Activated T-helper 1 cell treated with anti-CD3 and anti-CD28 coated beads, Interleukin-12 subunit alpha, Interleukin-12 subunit beta, Interleukin-2, Interleukin-4 antibody, amounts not matched to agents 30 ng/mL and 10 ng/mL and 1 ng/mL, durations not matched to agents 14 hours and 24 hours and 36 hours (primary cell): ENCODE measurements at regions of chr20 and their contacts with region 1.

Region 1: GRCh38 chr20:62302341-62303058 is at the start of gene ADRM1:
- DNase-seq: peak; percentile 97
- H3K4me3 Mint-ChIP-seq: peak within 1 kb of the TSS; percentile 98
- H3K27ac Mint-ChIP-seq: peak within 1 kb of the TSS; percentile 100
- H3K4me1 Mint-ChIP-seq: peaks cover 28% of the 10 kb centered on the region
- H3K27me3 Mint-ChIP-seq: no peaks in the 10 kb centered on the region
- total RNA-seq, gene ADRM1: 181 and 188 TPM in 2 replicates

Region 2: DNA sequence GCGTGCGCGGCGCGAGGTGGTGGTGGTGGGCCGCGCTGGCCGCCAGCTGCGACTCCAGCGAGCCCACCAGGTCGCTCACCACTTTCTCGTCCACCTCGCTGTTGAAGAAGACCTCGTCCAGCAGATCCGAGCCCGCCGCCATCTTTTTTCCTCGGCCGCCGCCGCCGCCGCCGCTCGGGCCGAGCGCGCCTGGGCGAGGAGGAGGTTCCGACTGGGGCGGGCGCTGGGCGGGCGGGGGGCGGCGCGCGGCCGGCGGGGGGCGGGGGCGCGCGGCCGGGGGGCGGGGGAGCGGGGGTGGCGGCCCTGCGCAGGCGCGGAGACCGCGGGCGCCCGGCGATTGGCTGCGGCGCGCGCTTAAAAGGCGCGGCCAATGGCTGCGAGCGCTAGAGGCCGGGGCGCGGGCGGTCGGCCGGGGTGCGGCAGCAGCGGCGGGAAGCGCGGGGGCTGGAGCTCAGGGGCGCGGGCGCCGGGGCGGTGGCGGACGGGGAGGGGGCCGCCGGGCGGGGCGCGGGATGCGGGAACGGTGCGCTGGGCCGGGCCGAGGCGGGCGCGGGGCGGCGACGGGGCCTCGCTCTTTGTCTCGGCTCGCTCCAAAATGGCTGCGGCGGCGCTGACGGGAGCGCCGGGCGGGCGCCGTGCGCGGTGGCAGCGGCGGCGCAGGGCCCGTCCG is 236.7 kb before region 1 on chr20 and contains the start of gene TAF4:
- intact Hi-C with region 1: loop called (anchors 5 kb)
- DNase-seq: peak; percentile 80
- H3K4me3 Mint-ChIP-seq: peak within 1 kb of the TSS; percentile 84
- H3K27ac Mint-ChIP-seq: peak within 1 kb of the TSS; percentile 84
- H3K4me1 Mint-ChIP-seq: peaks cover 42% of the 10 kb centered on the region
- H3K27me3 Mint-ChIP-seq: peaks cover 6% of the 10 kb centered on the region
- total RNA-seq, gene TAF4: 26.3 and 28.3 TPM in 2 replicates

Region 3: DNA sequence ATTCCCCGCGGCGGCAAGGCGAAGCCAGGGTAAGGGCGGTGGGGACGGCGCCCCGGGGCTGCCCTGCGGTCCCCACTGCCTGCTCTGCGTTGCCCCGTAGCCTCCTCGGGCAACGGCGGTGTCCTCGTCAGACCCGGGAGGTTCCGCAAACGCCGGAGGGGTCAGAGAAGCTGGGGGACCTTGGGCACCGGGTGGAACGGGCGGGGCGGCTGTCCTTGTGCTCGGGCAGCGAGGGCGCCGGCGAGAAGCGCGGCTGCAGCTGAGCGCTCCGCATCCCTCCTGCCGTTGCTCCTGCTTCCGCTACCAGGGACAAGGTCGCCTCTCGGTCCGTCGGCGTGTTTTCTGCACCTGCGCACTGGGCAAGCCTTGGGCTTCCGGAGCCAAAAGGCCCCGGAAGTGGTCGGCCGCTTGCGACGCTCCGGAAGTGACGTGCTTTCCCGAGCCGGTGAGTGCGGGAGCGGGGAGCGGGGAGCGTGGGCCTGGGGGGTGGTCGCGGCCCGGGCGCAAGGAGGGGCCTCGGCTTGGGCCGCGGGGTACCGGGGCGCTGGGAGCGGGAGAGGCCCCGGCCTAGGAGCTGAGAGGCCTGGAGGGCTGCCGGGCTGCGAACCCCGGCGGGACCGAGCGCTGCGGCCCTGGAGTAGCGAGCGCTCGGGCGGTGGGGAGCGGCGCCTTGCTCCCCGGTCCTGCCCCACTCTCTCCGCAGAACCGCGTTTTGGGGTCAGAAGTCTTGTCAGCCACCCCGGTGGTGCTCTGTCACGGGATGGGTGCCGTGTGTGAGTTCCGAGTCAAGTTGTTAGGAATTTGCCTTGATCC is 119.7 kb before region 1 on chr20 and contains the start of gene MTG2:
- intact Hi-C with region 1: loop called (anchors 1 kb)
- DNase-seq: peak; percentile 95
- H3K4me3 Mint-ChIP-seq: peak within 1 kb of the TSS; percentile 92
- H3K27ac Mint-ChIP-seq: peak within 1 kb of the TSS; percentile 93
- H3K4me1 Mint-ChIP-seq: peaks cover 39% of the 10 kb centered on the region
- H3K27me3 Mint-ChIP-seq: no peaks in the 10 kb centered on the region
- total RNA-seq, gene MTG2: 45.4 and 46.3 TPM in 2 replicates

Region 4: DNA sequence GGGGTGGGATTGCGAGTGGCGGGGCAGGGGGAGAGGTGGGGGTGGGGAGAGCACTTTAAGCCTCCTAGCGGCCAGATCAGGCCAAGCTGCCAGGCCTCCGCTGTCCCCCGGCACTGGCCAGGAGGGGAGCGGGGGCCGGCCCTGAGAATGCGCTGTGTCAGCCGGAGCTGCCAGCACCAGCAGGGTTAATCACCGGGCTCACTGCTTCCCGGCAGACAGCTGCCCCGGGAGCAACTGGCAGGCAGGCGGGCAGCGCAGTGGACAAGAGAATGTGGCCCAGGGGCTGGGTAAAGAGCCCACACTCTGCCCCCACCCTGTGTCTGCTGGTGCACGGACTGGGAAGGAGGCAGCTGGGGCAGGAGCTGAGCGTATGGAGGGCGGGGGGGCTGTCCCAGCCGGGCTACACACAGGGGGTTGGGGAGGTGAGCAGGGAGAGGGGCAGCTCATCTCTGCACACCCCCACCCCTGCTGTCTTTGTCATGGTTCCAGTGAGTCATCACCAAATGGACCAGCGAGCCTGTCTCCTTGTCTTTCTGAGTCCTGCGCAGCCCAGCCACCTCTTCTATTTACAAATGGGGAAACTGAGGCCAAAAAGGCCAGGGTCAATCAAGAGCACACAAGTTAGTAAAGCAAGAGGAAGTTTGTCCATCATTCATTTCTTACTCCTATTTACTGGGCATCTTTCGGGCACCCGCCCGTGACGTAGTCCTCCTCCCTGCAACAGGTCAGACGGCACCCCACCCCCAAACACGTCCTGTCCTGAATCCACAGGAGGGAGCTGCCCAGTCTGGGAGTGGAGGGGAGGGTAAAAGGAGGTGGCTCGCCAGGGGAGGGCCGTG is 66.7 kb after region 1 on chr20:
- intact Hi-C with region 1: loop called (anchors 5 kb)
- DNase-seq: no peak
- H3K4me3 Mint-ChIP-seq: no peak overlapping the region
- H3K27ac Mint-ChIP-seq: no peak overlapping the region
- H3K4me1 Mint-ChIP-seq: no peaks in the 10 kb centered on the region
- H3K27me3 Mint-ChIP-seq: peaks cover 27% of the 10 kb centered on the region

Region 5: GRCh38 chr20:62500237-62500864 is 197.9 kb after region 1 on chr20:
- intact Hi-C with region 1: loop called (anchors 1 kb)
- DNase-seq: peak; percentile 70
- H3K4me3 Mint-ChIP-seq: no peak overlapping the region
- H3K27ac Mint-ChIP-seq: peak overlapping the region; percentile 89
- H3K4me1 Mint-ChIP-seq: peaks cover 26% of the 10 kb centered on the region
- H3K27me3 Mint-ChIP-seq: no peaks in the 10 kb centered on the region

Region 6: DNA sequence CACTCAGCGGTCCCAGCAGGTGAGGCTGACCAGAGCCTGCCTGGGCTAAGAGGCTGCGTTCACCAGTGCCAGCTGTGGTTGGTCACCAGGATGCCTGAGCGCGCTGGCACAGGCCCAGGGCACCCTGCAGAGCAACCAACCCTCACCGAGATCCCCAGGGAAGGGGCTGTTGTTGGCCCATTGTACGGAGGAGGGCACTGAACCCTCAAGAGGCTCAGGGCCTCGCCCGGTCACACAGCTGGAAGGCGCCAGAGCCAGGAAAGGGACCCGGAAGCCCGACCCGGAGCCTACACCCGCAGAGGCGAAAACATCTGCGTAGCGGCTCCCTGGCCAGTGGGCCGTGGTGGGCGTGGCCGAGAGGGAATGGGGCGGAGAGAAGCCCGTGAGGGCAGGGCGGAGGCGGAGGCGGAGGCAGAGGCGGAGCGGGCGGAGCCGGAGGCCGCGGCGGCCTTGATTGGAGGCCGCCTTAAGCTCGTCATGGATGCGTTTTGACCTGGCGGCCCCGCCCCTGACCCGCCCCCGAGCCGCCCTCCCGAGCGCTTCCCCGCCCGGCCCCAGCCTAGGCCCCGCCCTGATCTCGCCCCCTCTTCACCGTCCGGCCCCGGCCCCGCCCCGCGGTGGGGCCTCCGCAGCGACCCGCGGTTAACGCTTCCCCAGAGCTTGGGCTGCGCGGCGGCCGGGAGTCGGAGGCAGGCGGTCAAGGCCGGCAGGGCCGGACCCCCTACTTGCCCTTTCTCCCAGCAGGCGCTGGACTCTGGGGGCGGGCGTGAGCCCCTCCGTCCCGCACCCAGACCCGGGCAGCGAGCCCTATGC is 491.6 kb after region 1 on chr20:
- intact Hi-C with region 1: loop called (anchors 1 kb)
- DNase-seq: peak; percentile 96
- H3K4me3 Mint-ChIP-seq: peak overlapping the region; percentile 81
- H3K27ac Mint-ChIP-seq: peak overlapping the region; percentile 91
- H3K4me1 Mint-ChIP-seq: peaks cover 15% of the 10 kb centered on the region
- H3K27me3 Mint-ChIP-seq: peaks cover 9% of the 10 kb centered on the region